Left ventricle myocardium inferior (tissue), 1 donor: ENCODE measurements at regions of chr10 and their contacts with region 1.

Region 1: DNA sequence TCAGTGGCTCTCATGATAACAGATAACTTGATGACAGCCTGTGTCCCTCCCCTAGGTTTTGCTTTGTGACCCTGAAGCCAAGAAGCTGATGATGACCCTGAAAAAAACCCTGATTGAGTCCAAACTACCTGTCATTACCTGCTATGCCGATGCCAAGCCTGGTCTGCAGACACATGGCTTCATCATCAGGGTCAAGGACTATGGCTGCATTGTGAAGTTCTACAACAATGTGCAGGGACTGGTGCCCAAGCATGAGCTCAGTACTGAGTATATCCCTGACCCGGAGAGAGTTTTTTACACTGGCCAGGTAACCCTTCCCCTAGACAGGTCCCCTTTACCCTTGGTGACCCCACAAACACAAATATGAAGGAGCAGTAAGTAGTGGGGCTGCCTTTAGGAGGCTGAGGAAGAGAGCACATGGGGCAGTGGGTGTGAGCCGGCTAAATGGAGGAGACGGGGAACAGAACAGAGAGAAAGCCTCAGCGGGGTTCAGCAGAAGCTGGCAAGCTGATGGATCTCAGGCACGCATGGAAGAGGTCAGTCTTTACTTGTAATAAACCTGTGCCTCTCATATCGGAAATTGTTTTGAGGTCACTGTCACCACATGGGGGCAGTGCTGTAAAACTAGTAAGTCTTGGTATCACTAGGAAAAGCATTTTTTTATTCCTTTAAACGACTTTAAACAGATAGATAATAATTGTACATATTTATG is 20.2 kb downstream of the PDCD11 start:
- DNase-seq: peak; percentile 22
- H3K4me3 ChIP-seq: no peak overlapping the region
- H3K27ac ChIP-seq: no peak overlapping the region
- H3K4me1 ChIP-seq: no peaks in the 10 kb centered on the region
- H3K27me3 ChIP-seq: no peaks in the 10 kb centered on the region
- CTCF ChIP-seq: peak; percentile 81

Region 2: DNA sequence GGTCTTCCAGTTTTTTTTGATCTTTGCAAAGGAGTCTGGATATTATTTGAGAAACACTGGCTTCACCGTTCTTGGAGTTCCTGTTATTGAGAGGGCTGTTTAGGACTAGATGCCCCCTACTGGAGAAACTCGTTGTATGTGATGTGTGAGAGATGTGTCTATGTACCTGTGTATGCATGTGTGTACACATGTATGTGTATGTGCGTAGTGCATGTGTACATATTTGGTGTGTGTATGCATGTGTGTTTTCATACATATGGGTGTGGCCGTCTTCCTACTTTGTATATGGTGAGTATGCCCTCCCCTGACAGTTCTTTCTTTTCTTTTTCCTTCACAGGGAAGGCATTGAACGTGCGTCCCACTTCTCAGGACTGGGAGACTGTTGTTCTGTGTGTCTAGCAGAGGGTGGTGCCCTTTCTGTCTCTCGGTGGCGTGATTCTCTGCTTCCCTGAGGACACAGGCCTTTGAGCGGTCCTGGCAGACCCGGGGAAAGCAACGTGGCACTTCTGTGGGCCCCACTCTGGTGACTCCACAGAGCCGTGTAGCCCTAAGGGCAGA is 65.5 kb after region 1 on chr10:
- intact Hi-C with region 1: loop called (anchors 2 kb)
- DNase-seq: no peak
- H3K4me3 ChIP-seq: no peak overlapping the region
- H3K27ac ChIP-seq: no peak overlapping the region
- H3K4me1 ChIP-seq: peaks cover 7% of the 10 kb centered on the region
- H3K27me3 ChIP-seq: peaks cover 7% of the 10 kb centered on the region
- CTCF ChIP-seq: peak; percentile 78

Region 3: GRCh38 chr10:103859161-103860086 is 442.8 kb after region 1 on chr10:
- intact Hi-C with region 1: no loop called
- DNase-seq: no peak
- H3K4me3 ChIP-seq: no peak overlapping the region
- H3K27ac ChIP-seq: no peak overlapping the region
- H3K4me1 ChIP-seq: peaks cover 17% of the 10 kb centered on the region
- H3K27me3 ChIP-seq: no peaks in the 10 kb centered on the region
- CTCF ChIP-seq: peak; percentile 82